OCI-LY7 (cell line): ENCODE measurements at regions of chr1 and their contacts with region 1.

Region 1: DNA sequence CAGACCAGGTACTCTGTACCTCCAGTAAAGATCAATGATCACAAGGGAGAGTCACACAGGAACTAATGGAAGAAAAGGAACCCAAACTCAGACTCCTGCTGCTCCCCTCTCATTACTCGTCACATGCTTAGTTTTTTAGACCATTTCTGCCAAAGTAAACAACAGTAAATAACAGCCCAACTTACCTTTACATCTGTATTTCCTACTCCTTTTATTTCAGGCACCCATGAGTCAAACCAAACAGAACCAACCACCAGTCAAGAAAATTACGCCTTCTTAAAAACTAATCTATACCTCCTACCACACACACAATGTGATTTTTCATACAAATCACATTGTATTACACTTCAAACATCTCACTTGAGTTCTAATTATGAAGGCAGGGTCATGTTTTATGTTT is 61.4 kb upstream of the HTR1D start:
- DNase-seq: no peak
- H3K4me3 ChIP-seq: no peak overlapping the region
- H3K27ac ChIP-seq: no peak overlapping the region
- H3K4me1 ChIP-seq: no peaks in the 10 kb centered on the region
- CTCF ChIP-seq: no peak

Region 2: GRCh38 chr1:23184212-23184934 is 94.3 kb before region 1 on chr1:
- CTCF ChIA-PET with region 1: no interaction called
- POLR2A ChIA-PET with region 1: no interaction called
- intact Hi-C with region 1: no loop called
- DNase-seq: peak; percentile 69
- H3K4me3 ChIP-seq: no peak overlapping the region
- H3K27ac ChIP-seq: no peak overlapping the region
- H3K4me1 ChIP-seq: peaks cover 12% of the 10 kb centered on the region
- CTCF ChIP-seq: peak; percentile 89

Region 3: DNA sequence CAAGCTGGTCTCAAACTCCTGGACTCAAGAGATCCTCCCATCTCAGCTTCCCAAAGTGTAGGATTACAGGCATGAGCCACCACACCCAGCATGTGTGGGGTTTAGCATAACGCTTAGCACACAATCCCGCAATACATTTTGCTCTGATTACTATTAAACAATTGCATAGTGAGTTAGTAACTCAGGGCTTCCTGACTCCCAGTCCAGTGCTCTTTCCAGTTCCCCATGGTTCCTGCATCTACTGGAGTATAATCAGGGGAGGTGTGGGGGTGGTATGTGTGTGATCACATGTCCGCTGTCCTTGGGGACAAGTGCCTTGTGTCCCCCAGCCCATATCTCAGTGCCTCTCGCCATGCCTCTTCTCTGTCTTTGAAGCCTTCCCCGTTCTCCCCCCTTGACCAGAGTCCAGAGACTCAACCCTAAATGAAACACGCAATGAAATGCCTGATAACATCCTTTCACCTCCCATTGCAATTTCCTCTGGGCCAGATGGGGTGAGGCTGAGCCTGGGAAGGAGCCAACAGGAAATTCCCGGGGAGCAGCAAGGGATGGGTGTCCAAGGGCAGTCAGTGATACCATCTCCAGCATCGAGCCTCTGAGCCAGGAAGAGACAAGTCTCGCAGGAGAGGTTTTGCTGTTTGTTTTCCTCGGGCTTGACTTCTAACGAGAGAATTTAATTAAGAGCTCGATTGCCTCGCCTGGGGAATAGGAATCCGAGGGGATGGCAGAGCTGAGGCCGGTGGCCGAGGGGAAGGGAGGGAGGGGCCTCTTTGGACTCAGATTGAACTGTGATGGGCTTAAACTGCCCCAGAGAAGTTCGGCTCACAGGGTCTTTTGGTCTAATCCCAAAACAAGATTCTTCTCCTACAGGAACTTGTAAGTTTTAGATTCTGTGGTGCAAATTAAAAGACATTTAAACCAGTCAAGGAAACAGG is 53.7 kb before region 1 on chr1:
- CTCF ChIA-PET with region 1: no interaction called
- POLR2A ChIA-PET with region 1: no interaction called
- intact Hi-C with region 1: loop called (anchors 5 kb)
- DNase-seq: no peak
- H3K4me3 ChIP-seq: no peak overlapping the region
- H3K27ac ChIP-seq: no peak overlapping the region
- H3K4me1 ChIP-seq: no peaks in the 10 kb centered on the region
- CTCF ChIP-seq: no peak